Posterior cingulate gyrus (tissue), 11 donors: ENCODE measurements at regions of chr19 and their contacts with region 1.

Region 1: DNA sequence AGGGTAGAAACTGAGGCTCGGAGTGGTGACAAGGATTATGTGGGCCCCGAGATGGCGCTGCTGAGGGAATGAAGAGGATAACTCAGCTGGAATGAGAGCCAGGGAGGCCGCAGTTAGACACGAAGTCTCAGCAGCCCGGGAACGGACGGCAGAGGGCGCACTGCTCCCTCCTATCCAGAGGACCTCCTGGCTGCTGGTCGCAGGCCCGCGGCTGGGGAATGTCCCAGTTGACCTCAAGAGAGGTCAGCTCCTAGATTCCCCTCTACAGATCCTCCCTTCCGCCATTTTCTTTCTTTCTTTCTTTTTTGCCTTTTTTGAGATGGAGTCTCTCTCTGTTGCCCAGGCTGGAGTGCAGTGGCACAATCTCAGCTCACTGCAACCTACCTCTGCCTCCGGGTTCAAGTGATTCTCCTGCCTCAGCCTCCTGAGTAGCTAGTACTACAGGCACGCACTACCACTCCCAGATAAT is 24.1 kb upstream of the ASPDH start:
- DNase-seq: peak; percentile 80 to 99 (median 94)

Region 2: DNA sequence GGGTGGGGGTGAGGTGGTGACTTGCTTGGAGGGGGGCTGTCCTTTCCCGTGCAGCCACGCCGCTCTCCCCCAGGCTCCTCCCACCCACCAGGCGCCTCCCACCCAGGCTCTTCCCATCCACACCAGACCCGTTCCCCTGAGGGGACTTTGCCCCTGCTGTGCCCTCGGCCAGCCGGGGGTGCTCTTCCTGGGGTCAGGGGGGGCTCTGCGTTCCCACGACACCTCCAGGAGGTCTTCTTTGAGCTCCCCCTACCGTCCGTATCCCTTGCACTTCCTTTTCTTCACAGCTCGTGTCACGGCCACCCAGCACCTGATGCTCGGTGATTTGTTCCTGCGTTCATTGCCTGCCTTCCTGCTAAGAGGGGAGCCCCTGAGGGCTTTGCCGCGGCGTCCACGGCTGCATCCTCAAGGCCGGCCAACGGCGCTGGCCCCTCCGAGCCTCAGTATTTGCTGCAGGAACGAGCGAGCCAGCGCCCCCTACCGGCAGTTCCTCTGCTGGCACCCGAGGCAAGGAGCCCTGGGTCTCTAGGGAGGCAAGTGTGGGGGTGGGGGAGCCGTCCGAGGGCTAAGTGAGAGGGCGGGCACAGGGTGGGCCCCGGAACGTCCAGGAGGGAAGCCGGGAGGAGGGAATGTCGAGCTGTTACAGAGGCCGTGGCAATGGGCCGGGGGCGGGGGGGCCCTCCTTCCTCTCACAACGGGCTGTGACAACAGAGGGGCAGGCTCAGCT is 18.6 kb after region 1 on chr19:
- intact Hi-C with region 1: loop called (anchors 1 kb)
- DNase-seq: peak; percentile 76 to 98 (median 90)

Region 3: DNA sequence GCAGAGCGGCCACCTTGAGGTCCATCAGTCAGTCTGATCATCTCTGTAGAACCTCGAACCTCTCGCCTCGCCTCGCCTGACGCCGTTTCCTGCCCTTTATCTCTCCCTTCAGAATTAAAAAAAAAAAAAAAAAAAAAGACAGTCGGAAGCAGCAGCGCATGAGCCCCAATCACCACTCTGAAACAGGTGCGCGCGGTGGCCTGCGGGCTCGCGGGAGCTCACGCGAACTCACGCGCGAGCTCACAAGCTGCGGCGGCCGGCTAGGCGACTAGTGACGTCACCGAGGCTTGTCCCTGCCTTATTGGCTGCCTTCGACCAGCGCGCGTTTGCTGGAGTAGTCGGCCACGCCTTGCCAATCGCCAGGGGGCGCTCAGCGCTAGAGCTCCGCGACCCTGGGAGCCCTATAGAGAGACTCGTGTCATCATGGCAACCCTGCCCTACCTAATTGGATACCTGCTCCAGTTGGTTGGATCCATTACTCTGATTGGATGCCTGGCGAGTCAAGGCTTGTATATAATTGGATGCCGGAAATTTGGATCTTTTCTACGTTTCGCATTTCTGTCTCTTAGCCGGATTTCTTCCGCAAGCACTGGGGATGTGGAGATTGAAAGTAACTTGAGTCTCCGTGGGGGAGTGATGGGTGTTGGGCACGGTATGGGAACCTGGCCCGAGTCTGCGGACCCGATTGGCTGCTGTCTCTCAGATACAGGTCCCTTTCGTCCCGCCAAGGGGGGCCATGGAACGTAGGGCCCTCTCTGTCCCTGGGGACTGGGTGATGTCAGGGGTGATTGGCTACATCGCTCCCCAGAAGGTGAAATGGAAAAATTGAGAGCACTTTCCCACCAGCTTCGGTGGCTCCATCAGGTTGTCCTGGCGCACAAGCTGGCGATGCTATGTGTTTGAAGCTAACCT is 70.3 kb after region 1 on chr19:
- intact Hi-C with region 1: no loop called
- DNase-seq: peak; percentile 94 to 100 (median 99)

Region 4: DNA sequence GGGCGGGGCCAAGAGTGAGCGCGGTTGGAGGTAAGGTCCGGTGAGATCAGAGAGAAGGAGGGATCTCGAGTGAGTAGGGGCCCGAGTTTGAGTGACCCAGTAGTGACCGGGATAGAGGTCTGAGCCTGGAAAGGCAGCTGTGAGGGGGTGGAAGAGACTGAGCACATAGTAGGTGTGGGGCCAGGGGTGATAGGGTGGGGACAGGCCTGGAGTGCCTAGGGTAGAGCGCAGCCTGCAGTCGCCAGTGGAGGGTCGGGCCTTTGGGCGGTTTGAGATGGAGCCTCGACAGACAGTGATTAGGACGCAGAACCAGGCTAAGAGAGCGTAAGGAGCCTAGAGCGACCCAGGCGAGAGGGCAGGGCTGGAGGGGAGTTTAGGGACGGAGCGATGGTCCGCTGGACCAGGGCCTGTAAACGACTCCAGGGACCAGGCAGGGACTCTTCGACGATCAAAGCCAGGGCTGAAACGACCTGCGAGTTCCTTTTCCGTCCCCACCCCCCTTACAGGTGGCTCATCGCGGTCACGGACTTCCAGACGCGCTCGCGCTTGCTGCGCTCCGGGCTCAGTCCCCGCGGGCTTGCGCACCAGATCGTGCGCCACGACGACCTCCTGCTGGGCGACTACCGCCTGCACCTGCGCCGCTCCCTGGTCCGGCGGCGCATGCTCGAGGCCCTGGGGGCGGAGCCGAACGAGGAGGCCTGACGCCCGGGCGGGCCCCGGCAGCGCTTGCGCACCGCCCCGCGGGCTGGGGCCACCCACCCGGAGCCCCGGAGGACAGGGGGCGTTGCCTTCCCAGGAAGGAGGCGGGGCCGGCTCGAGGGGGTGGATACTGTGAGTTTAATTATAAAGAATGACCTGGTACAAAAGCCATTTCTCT is 120.9 kb after region 1 on chr19:
- intact Hi-C with region 1: no loop called
- DNase-seq: peak; percentile 75 to 99 (median 88)

Region 5: DNA sequence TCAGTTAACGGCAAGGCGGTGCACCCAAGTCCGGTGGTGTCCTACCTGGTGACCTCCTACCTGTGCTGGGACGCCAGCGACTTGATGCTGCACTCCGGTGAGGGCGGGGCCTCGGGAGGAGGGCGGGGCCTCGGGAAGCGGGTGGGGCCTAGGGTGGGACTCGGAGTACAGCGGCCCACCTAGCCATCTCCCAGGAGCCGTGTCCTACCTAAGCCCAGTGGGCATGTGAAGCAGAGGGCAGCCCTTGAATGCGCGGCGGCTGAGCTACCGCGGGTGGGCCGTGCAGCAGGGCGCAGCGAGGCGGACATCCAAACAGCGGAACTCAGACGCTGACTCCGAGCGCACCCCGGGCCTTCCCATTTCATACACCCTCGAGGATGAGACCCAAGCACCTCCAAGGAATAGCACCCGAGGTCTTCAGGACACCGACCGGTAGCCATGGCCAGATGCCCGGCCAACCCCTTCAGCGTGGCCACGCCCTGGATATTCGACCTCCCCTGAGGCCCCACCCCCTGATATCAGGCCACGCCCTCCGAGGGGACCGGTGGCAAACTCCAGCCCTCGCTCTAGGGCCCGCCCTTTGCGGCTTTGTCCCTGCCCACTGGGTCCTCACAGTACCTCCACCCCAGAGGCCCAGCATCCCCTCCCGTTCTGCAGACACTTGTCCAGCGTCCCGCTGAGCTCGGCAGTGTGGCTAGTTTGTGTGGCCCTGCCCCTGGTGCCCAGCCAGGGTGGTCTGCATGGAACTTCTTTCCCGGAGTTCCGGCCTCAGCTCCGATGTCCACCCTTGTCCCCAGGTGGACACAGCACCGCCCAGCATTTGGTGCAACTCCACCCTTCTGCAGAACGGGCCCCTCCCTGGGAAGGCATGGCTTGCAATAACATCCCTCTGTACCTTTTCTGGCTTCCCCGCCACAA is 280.4 kb after region 1 on chr19:
- intact Hi-C with region 1: no loop called
- DNase-seq: peak in 2 of 10 donors; percentile 56 to 70